ENCODE measurements at regions of chr6 and their contacts with region 1.

Region 1: GRCh38 chr6:125114248-125114858 is 39.2 kb upstream of the TPD52L1 start:
- DNase-seq: peak; percentile 44
- H3K4me3 ChIP-seq: no peak overlapping the region
- H3K27ac ChIP-seq: no peak overlapping the region
- H3K4me1 ChIP-seq: no peaks in the 10 kb centered on the region
- H3K27me3 ChIP-seq: no peaks in the 10 kb centered on the region
- CTCF ChIP-seq: peak; percentile 69 to 88 (median 80)
- POLR2A ChIP-seq: no peak

Region 2: GRCh38 chr6:124870611-124871459 is 243.5 kb before region 1 on chr6:
- intact Hi-C with region 1: loop called (anchors 1 kb)
- DNase-seq: no peak
- H3K4me3 ChIP-seq: no peak overlapping the region
- H3K27ac ChIP-seq: no peak overlapping the region
- H3K4me1 ChIP-seq: no peaks in the 10 kb centered on the region
- H3K27me3 ChIP-seq: no peaks in the 10 kb centered on the region
- CTCF ChIP-seq: peak; percentile 17 to 77 (median 58)
- POLR2A ChIP-seq: no peak

Region 3: GRCh38 chr6:125182237-125183008 is 68.1 kb after region 1 on chr6:
- intact Hi-C with region 1: no loop called
- DNase-seq: no peak
- H3K4me3 ChIP-seq: no peak overlapping the region
- H3K27ac ChIP-seq: no peak overlapping the region
- H3K4me1 ChIP-seq: no peaks in the 10 kb centered on the region
- H3K27me3 ChIP-seq: no peaks in the 10 kb centered on the region
- CTCF ChIP-seq: no peak
- POLR2A ChIP-seq: no peak

Measured in prostate gland (tissue), 2 donors.